ENCODE measurements at regions of chrX and their contacts with region 1.

Region 1: GRCh38 chrX:45824471-45824870 is 623.8 kb upstream of the DIPK2B start:
- DNase-seq: no peak

Region 2: DNA sequence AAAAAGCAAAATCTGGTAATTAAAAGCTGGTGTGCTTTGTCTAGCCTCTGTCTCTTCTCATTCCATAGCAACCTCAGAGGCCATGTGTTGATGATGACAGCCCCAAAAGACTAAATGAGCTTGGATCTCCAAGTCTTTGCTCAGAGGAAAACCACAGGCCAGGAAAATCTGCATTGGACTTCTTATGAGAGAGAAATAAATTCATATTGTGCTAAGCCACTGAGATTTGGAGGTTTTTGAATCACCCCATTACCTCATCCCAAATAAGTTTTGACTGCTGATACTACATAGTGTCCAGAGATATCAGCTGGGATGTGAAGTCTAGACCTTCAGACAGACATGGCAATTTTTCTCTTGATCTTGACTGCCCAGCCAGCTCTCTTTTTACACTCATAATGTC is 445.2 kb before region 1 on chrX:
- intact Hi-C with region 1: no loop called
- DNase-seq: no peak

Region 3: DNA sequence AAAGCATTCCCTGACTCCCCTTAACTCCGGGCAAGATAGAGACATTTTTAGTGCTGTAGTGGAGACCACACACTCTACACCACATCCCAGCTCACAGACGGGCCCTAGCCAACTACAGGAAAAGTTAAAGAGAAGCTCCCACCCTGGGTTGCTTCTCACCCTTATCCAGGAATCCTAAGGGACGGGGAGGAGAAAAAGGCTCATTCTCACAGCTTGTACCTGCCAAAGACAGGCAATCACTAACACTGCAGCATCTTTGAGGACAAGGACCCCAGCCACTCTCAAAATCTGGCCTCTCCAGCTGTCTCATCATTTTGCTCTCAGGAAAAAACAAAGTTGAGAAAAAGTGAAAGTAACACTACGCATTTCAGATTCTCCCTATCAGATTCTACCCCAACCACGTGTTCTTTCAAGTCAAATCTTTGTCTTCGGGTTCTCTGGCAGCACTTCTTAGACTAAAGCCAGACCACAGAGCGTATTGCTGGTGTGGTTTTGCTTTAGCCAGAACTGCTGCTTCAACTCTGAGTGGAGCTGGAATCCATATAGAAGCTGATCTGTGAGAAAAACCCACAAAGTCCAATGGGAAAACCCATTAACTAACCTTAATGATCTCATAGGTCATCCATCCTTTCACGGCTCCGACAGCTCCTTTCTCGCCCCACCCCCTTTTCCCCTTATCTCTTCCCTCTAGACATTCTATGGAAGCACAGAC is 17.9 kb before region 1 on chrX:
- intact Hi-C with region 1: no loop called
- DNase-seq: no peak

Region 4: DNA sequence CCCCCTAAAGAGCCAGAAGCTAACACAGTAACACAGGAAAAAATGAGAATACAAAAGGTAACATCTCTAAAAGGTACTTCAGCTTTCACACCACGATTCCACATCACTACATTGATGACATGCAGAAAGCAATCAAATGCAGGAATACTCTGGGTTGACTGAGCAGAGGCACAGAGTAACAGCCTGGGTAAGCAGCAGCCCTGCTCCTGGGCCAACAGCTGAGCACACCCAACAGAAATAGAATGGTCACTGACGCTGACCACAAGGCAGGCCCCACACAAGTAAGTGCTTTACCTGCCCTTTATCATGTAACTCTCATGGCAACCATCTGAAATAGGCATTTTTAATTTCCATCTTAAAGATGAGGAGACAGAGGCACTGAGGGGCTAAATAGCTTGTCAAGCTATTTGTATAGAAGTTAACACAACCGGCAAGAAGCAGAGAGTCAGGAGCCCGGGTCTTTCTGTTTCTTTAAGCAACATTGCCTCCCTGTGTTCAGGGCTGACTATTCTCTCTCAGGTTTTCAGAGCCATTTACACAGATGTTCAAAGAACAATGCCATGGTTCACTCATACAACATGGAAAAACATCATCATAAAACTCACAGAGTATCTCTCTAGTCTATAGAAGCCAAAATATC is 551.9 kb after region 1 on chrX:
- intact Hi-C with region 1: loop called in 1 of 2 experiments (anchors 10 kb)
- DNase-seq: no peak